ENCODE measurements at regions of chr18 and their contacts with region 1.

Region 1: GRCh38 chr18:68564961-68565360 is 149.9 kb downstream of the TMX3 start:
- DNase-seq: no peak
- ATAC-seq: no peak

Region 2: GRCh38 chr18:67628674-67629073 is 936.3 kb before region 1 on chr18:
- intact Hi-C with region 1: no loop called
- DNase-seq: no peak
- ATAC-seq: no peak

Region 3: GRCh38 chr18:68533641-68534040 is 31.3 kb before region 1 on chr18:
- intact Hi-C with region 1: loop called (anchors 1 kb)
- DNase-seq: no peak
- ATAC-seq: no peak

Region 4: DNA sequence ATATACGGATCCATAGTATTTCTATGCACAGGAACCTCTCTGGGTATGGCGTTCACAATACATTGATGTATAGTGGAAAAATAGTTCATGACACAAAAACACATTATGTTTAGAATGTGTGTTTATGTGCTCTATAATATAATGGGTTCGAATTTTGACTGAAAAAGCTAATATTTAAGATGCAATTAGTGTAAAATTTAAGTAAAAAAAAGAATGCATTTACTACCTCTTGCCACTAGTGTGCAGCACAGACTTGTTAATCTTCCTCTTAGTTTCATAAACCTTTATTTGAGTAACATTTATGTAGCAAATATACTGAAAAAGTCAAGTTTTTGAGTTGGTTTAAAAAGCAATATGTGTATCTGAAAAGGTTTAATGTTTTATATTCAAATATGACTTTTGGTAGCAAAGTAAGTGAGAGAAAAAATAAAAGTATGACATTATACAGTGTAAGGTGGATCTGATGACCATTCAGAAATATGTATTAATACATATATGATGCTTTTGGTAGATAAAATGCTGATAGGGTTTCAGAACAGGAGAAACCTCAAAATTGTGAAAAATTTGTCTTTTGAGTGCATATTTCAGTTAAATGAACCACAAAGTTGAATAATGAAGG is 282.4 kb after region 1 on chr18:
- intact Hi-C with region 1: no loop called
- DNase-seq: no peak
- ATAC-seq: no peak

Region 5: GRCh38 chr18:69138088-69138487 is 573.1 kb after region 1 on chr18:
- intact Hi-C with region 1: no loop called
- DNase-seq: no peak
- ATAC-seq: no peak